Head of caudate nucleus (tissue), 42 donors: ENCODE measurements at regions of chr7 and their contacts with region 1.

Region 1: DNA sequence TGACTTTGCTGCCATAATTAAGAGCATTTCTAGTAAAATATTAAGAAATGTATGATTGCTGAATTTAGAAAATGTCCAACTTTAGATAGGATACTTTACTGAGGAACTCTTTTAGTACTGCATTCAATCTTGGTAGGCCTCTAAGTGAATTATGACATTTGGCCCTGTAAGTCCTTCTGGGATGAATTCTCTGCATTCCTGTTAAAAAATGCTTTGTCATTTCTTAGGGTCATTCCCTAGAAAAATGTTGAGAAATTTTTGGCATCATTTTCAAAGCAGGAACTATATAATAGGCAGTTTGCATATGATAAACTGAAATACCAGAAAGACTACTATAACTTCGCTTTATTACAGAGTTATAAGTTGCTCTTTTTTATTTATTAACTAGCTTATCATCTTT is 69.3 kb upstream of the PRR15 start:
- DNase-seq: no peak

Region 2: GRCh38 chr7:29430279-29430949 is 63.9 kb before region 1 on chr7:
- intact Hi-C with region 1: loop called (anchors 2 kb)
- DNase-seq: no peak